Activated CD4-positive, alpha-beta T cell treated with anti-CD3 and anti-CD28 coated beads, Interleukin-2, amount 10 ng/mL, durations not matched to agents 24 days and 14 days (primary cell): ENCODE measurements at regions of chr3 and their contacts with region 1.

Region 1: GRCh38 chr3:188752850-188753249 is 418.9 kb upstream of the TPRG1 start:
- DNase-seq: no peak
- H3K4me3 Mint-ChIP-seq: no peak overlapping the region
- H3K27ac Mint-ChIP-seq: peak overlapping the region; percentile 2
- H3K4me1 Mint-ChIP-seq: peaks cover 21% of the 10 kb centered on the region
- H3K27me3 Mint-ChIP-seq: peaks cover 2% of the 10 kb centered on the region

Region 2: DNA sequence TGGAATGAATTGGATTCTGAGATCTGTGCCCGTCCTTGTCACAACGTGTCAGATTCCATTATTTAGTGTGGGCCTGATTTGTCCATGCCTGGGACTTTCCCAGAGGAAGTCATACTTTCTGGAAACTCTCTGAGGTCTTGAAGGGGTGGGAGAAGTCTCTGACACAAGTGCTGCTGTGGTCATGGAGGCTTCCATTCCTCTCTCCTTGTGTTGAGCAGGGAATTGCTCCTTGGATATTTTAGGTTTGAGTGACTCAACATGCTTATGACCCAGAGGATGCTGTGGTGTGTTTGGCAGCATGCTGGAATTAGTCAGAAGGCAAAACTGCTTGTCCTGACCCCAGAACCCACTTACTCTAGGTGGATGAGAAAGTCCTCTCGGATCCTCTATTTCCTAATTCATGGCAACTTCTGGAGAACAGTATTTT is 466.8 kb before region 1 on chr3:
- intact Hi-C with region 1: loop called (anchors 1 kb)
- DNase-seq: no peak
- H3K4me3 Mint-ChIP-seq: peak overlapping the region; percentile 4
- H3K27ac Mint-ChIP-seq: peak overlapping the region; percentile 80
- H3K4me1 Mint-ChIP-seq: peaks cover 48% of the 10 kb centered on the region
- H3K27me3 Mint-ChIP-seq: no peaks in the 10 kb centered on the region

Region 3: DNA sequence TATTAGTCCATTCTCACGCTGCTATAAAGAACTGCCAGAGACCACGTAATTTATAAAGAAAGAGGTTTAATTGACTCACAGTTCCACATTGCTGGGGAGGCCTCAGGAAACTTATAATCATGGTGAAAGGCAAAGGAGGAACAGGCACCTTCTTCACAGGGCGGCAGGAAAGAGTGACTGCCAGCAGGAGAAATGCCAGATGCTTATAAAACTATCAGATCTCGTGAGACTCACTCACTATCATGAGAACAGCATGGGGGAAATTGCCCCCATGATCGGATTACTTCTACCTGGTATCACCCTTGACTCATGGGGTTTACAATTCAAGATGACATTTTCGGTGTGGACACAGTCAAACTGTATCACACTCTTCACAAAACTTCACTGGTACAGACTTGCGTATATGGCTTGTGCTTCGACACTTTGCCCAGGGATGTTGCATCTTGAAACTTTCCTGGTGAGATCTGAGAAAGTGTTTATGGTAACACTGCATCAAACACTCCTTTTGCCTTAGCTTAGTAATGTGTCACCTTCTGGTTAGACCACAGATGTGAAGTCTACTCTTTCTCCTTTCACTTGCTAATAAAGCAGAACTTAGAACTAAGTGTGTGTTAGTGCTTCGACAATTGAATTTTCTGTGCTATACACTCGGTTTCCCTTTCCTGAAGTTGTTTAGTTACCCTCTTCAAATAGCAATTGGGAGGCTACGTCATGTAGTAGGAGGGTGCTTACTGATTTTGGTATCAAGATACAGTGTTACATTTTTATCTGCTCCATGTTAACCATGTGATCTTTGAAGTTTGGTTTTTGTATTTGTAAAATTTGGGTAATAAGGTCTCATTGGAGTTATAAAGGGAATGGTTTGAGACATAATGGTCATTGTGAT is 413.2 kb before region 1 on chr3:
- intact Hi-C with region 1: loop called (anchors 10 kb)
- DNase-seq: peak; percentile 81
- H3K4me3 Mint-ChIP-seq: peak overlapping the region; percentile 66
- H3K27ac Mint-ChIP-seq: peak overlapping the region; percentile 93
- H3K4me1 Mint-ChIP-seq: peaks cover 34% of the 10 kb centered on the region
- H3K27me3 Mint-ChIP-seq: peaks cover 6% of the 10 kb centered on the region

Region 4: GRCh38 chr3:188683032-188683521 is 69.8 kb before region 1 on chr3:
- intact Hi-C with region 1: loop called (anchors 5 kb)
- DNase-seq: no peak
- H3K4me3 Mint-ChIP-seq: no peak overlapping the region
- H3K27ac Mint-ChIP-seq: peak overlapping the region; percentile 47
- H3K4me1 Mint-ChIP-seq: peaks cover 28% of the 10 kb centered on the region
- H3K27me3 Mint-ChIP-seq: no peaks in the 10 kb centered on the region

Region 5: DNA sequence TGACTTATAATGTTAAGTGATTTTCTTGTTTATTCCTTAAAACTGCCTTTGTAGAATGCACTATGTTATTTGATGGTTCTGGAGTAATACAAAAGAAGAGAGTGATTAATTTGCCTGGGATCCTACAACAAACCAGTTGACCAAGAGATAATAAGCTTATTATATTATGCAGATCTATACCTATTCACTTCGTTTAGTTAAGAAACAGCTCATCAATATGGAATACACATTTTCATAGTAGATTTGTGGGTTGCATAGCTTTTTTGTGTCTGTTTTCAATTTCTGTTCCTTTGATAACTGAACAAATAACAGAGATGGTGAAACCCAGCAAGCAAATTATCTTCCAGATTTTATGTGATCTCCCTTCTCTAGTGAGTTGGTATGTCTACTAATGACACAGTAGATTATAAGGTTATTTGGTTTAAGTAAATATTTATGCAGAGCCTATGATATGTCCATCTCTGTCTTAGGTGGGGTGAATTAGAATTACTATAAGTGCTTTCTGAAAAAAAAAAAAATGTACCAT is 24.4 kb before region 1 on chr3:
- intact Hi-C with region 1: loop called (anchors 1 kb)
- DNase-seq: no peak
- H3K4me3 Mint-ChIP-seq: no peak overlapping the region
- H3K27ac Mint-ChIP-seq: no peak overlapping the region
- H3K4me1 Mint-ChIP-seq: peaks cover 21% of the 10 kb centered on the region
- H3K27me3 Mint-ChIP-seq: no peaks in the 10 kb centered on the region